Sciatic nerve (tissue), 2 donors: ENCODE measurements at regions of chr17 and their contacts with region 1.

Region 1: DNA sequence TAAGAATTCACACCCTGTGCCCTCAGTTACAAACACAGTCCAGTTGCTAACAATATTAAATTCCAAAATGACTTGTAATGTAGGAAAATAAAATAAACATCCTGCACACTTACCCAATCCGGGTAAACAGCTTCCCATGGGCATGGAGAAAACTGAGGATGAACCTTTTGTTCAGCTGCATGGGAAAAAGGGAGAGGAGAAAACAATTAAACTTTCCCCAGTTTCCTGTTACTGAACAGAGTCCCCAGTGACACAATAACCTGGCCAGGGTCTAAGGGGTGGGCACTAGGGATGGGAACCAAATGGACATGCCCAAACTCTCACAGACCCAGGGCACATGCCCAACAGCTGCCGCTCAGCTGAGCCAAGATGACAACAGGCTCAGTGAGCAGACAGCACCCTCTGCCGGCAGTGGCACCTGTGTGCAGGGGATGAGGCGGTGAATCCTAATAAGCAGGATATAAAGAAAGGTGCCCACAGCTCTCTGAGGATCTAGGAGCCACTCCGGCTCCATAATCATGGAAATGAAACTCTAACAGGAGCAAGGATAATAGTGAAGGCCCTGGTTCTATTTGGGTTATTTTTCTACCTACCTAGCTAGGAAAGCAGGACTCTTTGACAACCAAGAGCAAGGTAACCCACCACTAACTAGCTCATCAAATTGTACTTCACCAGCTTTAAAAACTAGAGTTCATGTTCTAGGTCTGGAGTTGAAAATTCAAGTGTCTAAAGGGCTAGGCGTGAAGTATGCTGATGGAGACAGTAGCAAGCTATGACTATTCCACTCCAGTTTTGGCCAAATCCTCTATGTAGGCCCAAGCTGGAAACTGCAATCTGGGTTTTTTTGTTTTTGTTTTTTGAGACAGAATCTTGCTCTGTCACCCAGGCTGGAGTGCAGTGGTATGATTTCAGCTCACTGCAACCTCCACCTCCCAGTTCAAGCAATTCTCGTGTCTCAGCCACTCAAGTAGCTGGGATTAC is 58.8 kb downstream of the SMG6 start:
- DNase-seq: peak; percentile 94
- ATAC-seq: peak; percentile 94

Region 2: GRCh38 chr17:1908699-1909309 is 336.0 kb before region 1 on chr17:
- intact Hi-C with region 1: loop called (anchors 5 kb)
- DNase-seq: peak; percentile 72
- ATAC-seq: peak; percentile 93

Region 3: GRCh38 chr17:2054512-2055291 is 190.1 kb before region 1 on chr17 and contains the start of gene HIC1:
- intact Hi-C with region 1: loop called (anchors 2 kb)
- DNase-seq: peak; percentile 90
- ATAC-seq: peak; percentile 60
- total RNA-seq, gene HIC1: 85.0 TPM

Region 4: GRCh38 chr17:2233441-2233947 is 11.3 kb before region 1 on chr17:
- intact Hi-C with region 1: no loop called
- DNase-seq: no peak
- ATAC-seq: peak; percentile 6

Region 5: DNA sequence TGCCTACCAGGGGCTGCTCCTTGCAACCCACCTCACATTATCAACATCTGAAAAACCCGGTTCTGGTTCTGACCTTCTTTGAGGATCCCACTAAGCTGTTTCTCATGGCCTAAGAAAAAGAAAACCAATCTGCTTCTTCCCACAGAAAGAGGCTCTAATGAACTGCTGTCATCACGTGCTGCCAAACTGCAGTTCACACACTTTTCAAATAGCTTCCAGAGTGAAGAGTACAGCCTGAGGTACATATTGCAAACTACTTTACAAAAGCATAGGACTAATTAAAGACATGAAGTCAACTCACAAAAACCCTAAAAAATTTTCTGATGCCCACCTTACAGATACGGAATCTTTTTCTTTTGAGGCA is 22.0 kb after region 1 on chr17:
- intact Hi-C with region 1: no loop called
- DNase-seq: no peak
- ATAC-seq: no peak